Mammary epithelial cell (primary cell): ENCODE measurements at regions of chr1 and their contacts with region 1.

Region 1: GRCh38 chr1:218537122-218537904 is 192.2 kb downstream of the TGFB2 start:
- DNase-seq: peak; percentile 62
- H3K4me3 ChIP-seq: no peak overlapping the region
- H3K27ac ChIP-seq: peak overlapping the region; percentile 62
- H3K4me1 ChIP-seq: peaks cover 18% of the 10 kb centered on the region
- H3K27me3 ChIP-seq: no peaks in the 10 kb centered on the region
- CTCF ChIP-seq: no peak

Region 2: DNA sequence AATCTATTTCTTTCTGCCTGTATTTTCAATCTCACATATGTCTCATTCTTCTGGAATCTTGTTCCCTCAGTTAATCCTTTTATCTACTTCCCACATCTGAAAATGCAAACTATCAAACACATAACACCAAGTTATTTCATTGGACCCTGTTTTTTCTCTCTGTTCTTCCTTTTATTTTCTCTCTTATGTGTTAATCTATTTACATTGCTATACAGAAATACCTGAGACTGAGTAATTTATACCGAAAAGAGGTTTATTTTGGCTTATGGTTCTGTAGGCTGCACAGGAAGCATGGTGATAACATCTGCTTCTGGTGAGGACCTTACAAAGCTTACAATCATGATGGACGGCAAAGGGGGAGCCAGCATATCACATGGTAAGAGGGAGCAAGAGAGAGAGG is 55.4 kb after region 1 on chr1:
- CTCF ChIA-PET with region 1: no interaction called
- dilution Hi-C with region 1: no loop called
- in situ Hi-C with region 1: no loop called
- intact Hi-C with region 1: loop called (anchors 2 kb)
- DNase-seq: peak; percentile 57
- H3K4me3 ChIP-seq: no peak overlapping the region
- H3K27ac ChIP-seq: no peak overlapping the region
- H3K4me1 ChIP-seq: peaks cover 8% of the 10 kb centered on the region
- H3K27me3 ChIP-seq: no peaks in the 10 kb centered on the region
- CTCF ChIP-seq: no peak

Region 3: DNA sequence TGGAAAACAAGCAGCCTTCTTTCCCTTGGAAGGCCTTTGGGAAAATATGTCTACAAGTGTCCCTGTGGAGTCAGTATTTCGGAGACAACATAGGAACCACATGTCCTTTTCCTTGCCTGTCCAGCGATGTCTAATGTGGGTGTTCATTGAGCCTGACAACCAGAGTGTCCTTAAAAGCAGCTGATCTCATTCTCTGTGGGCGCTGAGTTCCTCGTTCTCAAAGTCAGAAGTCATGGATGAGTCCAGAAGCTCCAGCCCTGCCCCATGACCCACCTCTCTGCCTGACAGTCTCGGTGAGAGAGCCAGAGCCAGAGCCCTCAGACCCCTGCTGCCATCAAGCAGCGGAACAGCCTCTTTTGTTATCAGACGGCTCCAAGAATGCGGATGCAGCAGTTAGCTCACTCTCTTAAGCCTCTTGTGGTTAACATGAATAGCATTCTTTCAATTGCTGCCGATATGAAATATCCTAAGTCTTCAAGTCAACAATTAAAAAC is 137.0 kb after region 1 on chr1:
- CTCF ChIA-PET with region 1: no interaction called
- dilution Hi-C with region 1: no loop called
- in situ Hi-C with region 1: no loop called
- intact Hi-C with region 1: loop called (anchors 10 kb)
- DNase-seq: no peak
- H3K4me3 ChIP-seq: no peak overlapping the region
- H3K27ac ChIP-seq: peak overlapping the region; percentile 28
- H3K4me1 ChIP-seq: peaks cover 38% of the 10 kb centered on the region
- H3K27me3 ChIP-seq: no peaks in the 10 kb centered on the region
- CTCF ChIP-seq: peak in 1 of 2 donors; percentile 25